MCF 10A (cell line): ENCODE measurements at regions of chr11 and their contacts with region 1.

Region 1: DNA sequence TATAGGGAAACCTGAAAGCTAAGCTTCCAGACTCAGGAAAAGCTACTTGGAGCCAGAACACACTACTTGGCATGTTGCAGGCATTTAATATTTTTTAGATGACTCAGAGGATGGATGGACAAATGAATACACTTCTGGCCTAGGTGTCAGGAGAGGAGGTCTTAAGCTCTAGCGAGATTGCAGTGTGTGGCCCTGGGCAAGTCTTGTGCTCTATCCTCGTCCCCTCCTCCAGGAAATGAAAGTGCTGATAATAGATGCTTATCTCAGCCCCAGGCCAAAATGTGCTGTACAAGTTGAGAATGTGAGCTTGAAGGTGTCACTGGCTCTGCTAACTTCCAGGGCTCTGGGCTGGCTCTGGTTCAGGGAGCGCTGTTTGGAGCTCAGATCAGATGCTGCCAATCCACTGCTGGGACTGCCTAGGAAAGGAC is 136.3 kb downstream of the PKNOX2 start:
- DNase-seq: peak; percentile 89
- H3K4me3 Mint-ChIP-seq: no peak overlapping the region
- H3K27ac Mint-ChIP-seq: peak overlapping the region; percentile 2
- H3K4me1 Mint-ChIP-seq: peaks cover 15% of the 10 kb centered on the region
- H3K27me3 Mint-ChIP-seq: no peaks in the 10 kb centered on the region
- CTCF ChIP-seq: no peak

Region 2: GRCh38 chr11:125192183-125192582 is 108.6 kb before region 1 on chr11:
- CTCF ChIA-PET with region 1: no interaction called
- POLR2A ChIA-PET with region 1: no interaction called
- intact Hi-C with region 1: no loop called
- DNase-seq: no peak
- H3K4me3 Mint-ChIP-seq: no peak overlapping the region
- H3K27ac Mint-ChIP-seq: no peak overlapping the region
- H3K4me1 Mint-ChIP-seq: no peaks in the 10 kb centered on the region
- H3K27me3 Mint-ChIP-seq: peaks cover 51% of the 10 kb centered on the region
- CTCF ChIP-seq: no peak

Region 3: GRCh38 chr11:125289419-125290098 is 11.2 kb before region 1 on chr11:
- CTCF ChIA-PET with region 1: interaction called, 4 read pairs
- POLR2A ChIA-PET with region 1: interaction called, 12 read pairs
- intact Hi-C with region 1: no loop called
- DNase-seq: peak; percentile 23
- H3K4me3 Mint-ChIP-seq: no peak overlapping the region
- H3K27ac Mint-ChIP-seq: no peak overlapping the region
- H3K4me1 Mint-ChIP-seq: no peaks in the 10 kb centered on the region
- H3K27me3 Mint-ChIP-seq: no peaks in the 10 kb centered on the region
- CTCF ChIP-seq: no peak

Region 4: GRCh38 chr11:125701858-125702621 is 401.2 kb after region 1 on chr11:
- CTCF ChIA-PET with region 1: no interaction called
- POLR2A ChIA-PET with region 1: no interaction called
- intact Hi-C with region 1: no loop called
- DNase-seq: no peak
- H3K4me3 Mint-ChIP-seq: no peak overlapping the region
- H3K27ac Mint-ChIP-seq: no peak overlapping the region
- H3K4me1 Mint-ChIP-seq: no peaks in the 10 kb centered on the region
- H3K27me3 Mint-ChIP-seq: peaks cover 28% of the 10 kb centered on the region
- CTCF ChIP-seq: no peak